ENCODE measurements at regions of chr10 and their contacts with region 1.

Region 1: DNA sequence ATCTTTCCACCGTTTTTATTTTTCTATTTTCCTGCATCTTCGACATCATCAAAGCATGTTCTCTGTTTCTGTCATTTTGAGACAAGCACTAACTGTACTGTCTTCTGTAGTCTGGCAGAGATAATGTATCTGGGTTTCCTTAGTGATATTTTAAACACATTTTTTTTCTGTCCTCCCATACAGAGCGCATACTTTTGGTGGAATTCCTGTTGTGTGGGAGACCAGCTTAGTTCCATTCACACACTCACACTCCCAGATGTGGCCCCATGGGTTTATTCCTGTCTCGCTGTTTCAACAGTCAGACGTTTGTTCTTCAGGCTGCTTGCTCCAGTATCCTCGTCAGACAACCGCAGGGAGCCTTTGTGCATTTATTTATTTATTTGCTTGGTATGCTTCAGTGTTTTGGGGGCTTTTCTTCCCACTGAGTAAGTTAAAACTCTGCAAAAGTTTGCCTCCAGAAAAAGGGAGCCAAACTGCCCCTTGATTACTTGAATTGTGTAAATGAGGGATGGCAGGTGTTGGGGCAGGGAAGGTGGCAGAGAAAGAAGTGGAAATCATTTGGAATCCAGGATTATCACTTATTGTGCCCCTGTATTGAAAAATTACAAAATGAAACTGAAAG is 456.8 kb upstream of the KLF6 start:
- DNase-seq: no peak
- H3K4me3 Mint-ChIP-seq: no peak overlapping the region
- H3K27ac Mint-ChIP-seq: no peak overlapping the region
- H3K4me1 Mint-ChIP-seq: peaks cover 33% of the 10 kb centered on the region
- H3K27me3 Mint-ChIP-seq: peaks cover 3% of the 10 kb centered on the region

Region 2: GRCh38 chr10:4067531-4067930 is 174.3 kb before region 1 on chr10:
- intact Hi-C with region 1: loop called (anchors 10 kb)
- DNase-seq: no peak
- H3K4me3 Mint-ChIP-seq: no peak overlapping the region
- H3K27ac Mint-ChIP-seq: no peak overlapping the region
- H3K4me1 Mint-ChIP-seq: peaks cover 17% of the 10 kb centered on the region
- H3K27me3 Mint-ChIP-seq: no peaks in the 10 kb centered on the region

Region 3: GRCh38 chr10:4195213-4195612 is 46.6 kb before region 1 on chr10:
- intact Hi-C with region 1: no loop called
- DNase-seq: no peak
- H3K4me3 Mint-ChIP-seq: no peak overlapping the region
- H3K27ac Mint-ChIP-seq: no peak overlapping the region
- H3K4me1 Mint-ChIP-seq: peaks cover 5% of the 10 kb centered on the region
- H3K27me3 Mint-ChIP-seq: peaks cover 12% of the 10 kb centered on the region

Region 4: GRCh38 chr10:4353964-4354363 is 112.1 kb after region 1 on chr10:
- intact Hi-C with region 1: loop called (anchors 10 kb)
- DNase-seq: no peak
- H3K4me3 Mint-ChIP-seq: no peak overlapping the region
- H3K27ac Mint-ChIP-seq: peak overlapping the region; percentile 40
- H3K4me1 Mint-ChIP-seq: peaks cover 23% of the 10 kb centered on the region
- H3K27me3 Mint-ChIP-seq: peaks cover 3% of the 10 kb centered on the region